Naive thymus-derived CD4-positive, alpha-beta T cell (primary cell): ENCODE measurements at regions of chr1 and their contacts with region 1.

Region 1: GRCh38 chr1:108199781-108200570 is at the start of gene SLC25A24:
- DNase-seq: peak; percentile 58 to 83 (median 71)
- ATAC-seq: peak; percentile 96
- H3K4me3 ChIP-seq: peak within 1 kb of the TSS; percentile 75
- H3K4me3 Mint-ChIP-seq: peak within 1 kb of the TSS; percentile 69 to 93 (median 88)
- H3K27ac ChIP-seq: peak within 1 kb of the TSS; percentile 65
- H3K27ac Mint-ChIP-seq: peak within 1 kb of the TSS; percentile 52 to 87 (median 82)
- H3K4me1 ChIP-seq: peaks cover 3 to 16% of the 10 kb centered on the region in 2 donors
- H3K4me1 Mint-ChIP-seq: peaks cover 18 to 42% (median 30%) of the 10 kb centered on the region in 7 donors
- H3K27me3 ChIP-seq: no peaks in the 10 kb centered on the region
- H3K27me3 Mint-ChIP-seq: peaks cover 0 to 18% (median 0%) of the 10 kb centered on the region in 5 donors
- total RNA-seq, gene SLC25A24: 7.1 to 27.2 (median 10.2) TPM

Region 2: DNA sequence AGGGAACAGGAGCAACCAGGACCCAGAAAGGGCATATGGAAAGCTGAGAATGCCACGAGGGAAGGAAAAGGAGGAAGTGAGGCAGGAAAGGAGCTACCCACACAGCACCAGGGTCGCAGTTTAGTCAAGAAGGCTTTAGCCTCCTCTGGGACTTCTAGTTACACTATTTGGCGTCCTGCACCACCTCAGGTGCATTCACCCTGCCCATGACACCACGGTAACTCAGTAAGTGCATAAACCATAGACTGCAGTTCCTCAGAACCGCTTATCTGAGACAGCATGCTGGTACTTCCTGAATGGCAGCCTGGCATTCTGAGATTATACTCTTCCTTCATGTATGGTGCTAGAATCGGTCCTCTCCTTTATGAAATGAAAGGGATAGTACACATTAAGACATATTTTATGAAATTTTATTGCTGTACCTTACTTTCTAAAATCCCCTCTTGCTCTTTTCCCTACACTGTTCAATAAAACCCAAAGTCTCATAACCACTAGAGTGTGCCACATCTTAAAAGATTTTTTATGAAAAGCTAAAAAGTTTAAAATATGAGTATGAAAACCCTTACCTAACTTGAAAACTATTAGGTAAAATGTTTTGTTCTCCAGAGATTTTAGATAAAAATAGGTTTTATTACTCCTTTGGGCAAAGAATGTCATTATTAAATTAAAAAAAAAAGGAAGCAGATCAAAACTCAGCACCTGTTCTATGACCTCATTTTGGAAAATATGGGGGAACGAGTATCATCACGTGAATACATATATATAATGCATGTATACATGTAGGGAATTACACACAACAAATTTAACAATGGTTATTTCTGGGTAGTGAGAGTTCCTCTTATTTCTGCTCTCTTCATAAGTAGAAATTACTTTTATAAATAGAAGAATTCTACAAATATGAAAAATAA is 302.3 kb before region 1 on chr1:
- CTCF ChIA-PET with region 1: no interaction called
- POLR2A ChIA-PET with region 1: no interaction called
- intact Hi-C with region 1: loop called in 1 of 2 experiments (anchors 5 kb)
- DNase-seq: peak in 5 of 9 donors; percentile 4 to 15 (median 10)
- ATAC-seq: peak; percentile 84
- H3K4me3 ChIP-seq: no peak overlapping the region
- H3K4me3 Mint-ChIP-seq: peak overlapping the region in 9 of 10 donors; percentile 22 to 81 (median 60)
- H3K27ac ChIP-seq: no peak overlapping the region
- H3K27ac Mint-ChIP-seq: peak overlapping the region in 8 of 9 donors; percentile 2 to 87 (median 54)
- H3K4me1 ChIP-seq: peaks cover 8 to 14% of the 10 kb centered on the region in 2 donors
- H3K4me1 Mint-ChIP-seq: peaks cover 21 to 59% (median 45%) of the 10 kb centered on the region in 7 donors
- H3K27me3 ChIP-seq: no peaks in the 10 kb centered on the region
- H3K27me3 Mint-ChIP-seq: no peaks in the 10 kb centered on the region

Region 3: GRCh38 chr1:108125312-108126138 is 74.5 kb before region 1 on chr1:
- CTCF ChIA-PET with region 1: interaction called, 3 read pairs
- POLR2A ChIA-PET with region 1: no interaction called
- intact Hi-C with region 1: loop called in 1 of 2 experiments (anchors 2 kb)
- DNase-seq: peak; percentile 35 to 77 (median 67)
- ATAC-seq: peak; percentile 97
- H3K4me3 ChIP-seq: no peak overlapping the region
- H3K4me3 Mint-ChIP-seq: no peak overlapping the region
- H3K27ac ChIP-seq: no peak overlapping the region
- H3K27ac Mint-ChIP-seq: peak overlapping the region in 4 of 9 donors; percentile 19 to 69 (median 48)
- H3K4me1 ChIP-seq: no peaks in the 10 kb centered on the region
- H3K4me1 Mint-ChIP-seq: peaks cover 4 to 10% (median 5%) of the 10 kb centered on the region in 7 donors
- H3K27me3 ChIP-seq: no peaks in the 10 kb centered on the region
- H3K27me3 Mint-ChIP-seq: no peaks in the 10 kb centered on the region

Region 4: DNA sequence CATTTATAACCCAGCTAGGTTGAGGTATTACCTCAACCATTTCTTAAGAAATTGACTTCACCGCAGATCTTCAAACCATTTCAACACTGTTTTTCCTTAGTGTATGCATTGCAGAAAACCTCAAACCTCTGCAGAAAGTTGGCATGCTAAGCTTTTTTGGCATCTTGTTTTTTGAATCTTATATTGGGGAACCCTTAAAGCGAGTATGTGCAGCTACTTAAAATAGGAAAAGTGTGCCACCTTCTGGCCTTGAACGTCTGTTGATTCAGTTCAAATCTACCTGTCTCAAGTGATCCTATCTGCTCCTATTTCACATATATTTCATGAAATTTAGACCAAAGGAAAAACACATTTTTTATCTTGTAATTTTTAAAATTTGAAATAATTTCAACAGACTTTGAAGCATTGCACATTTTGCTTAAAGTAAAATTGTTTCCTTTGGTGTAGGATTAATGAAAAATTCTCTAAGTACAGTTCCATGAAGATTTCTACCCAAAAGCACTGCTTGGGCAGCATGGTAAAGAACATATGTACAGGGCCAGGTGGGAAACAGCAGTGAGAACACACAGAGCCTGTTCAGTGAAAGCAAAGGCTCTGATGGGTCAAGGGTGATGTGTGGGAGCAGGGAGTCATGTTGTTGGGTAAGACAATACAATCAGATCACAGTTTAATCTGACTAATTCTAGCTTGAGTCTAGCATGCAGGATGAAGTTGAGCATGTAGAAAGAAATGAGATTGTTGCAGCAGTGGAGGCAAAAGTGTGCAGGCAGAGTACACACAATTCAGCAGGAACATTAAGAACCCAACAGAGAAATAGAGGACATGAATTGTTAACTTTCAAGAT is 443.7 kb after region 1 on chr1:
- CTCF ChIA-PET with region 1: no interaction called
- POLR2A ChIA-PET with region 1: interaction called, 11 read pairs
- intact Hi-C with region 1: loop called (anchors 5 kb)
- DNase-seq: peak in 7 of 9 donors; percentile 59 to 78 (median 67)
- ATAC-seq: peak; percentile 45
- H3K4me3 ChIP-seq: no peak overlapping the region
- H3K4me3 Mint-ChIP-seq: peak overlapping the region in 9 of 10 donors; percentile 4 to 70 (median 47)
- H3K27ac ChIP-seq: peak overlapping the region; percentile 71
- H3K27ac Mint-ChIP-seq: peak overlapping the region; percentile 68 to 100 (median 98)
- H3K4me1 ChIP-seq: peaks cover 49 to 52% of the 10 kb centered on the region in 2 donors
- H3K4me1 Mint-ChIP-seq: peaks cover 55 to 81% (median 75%) of the 10 kb centered on the region in 7 donors
- H3K27me3 ChIP-seq: no peaks in the 10 kb centered on the region
- H3K27me3 Mint-ChIP-seq: no peaks in the 10 kb centered on the region